Endothelial cell of umbilical vein (primary cell): ENCODE measurements at regions of chr11 and their contacts with region 1.

Region 1: GRCh38 chr11:67288452-67289225 is 464 bp upstream of the ANKRD13D start:
- DNase-seq: peak; percentile 86
- H3K4me3 ChIP-seq: peak overlapping the region; percentile 52 to 65 (median 54)
- H3K27ac ChIP-seq: peak overlapping the region; percentile 61
- H3K4me1 ChIP-seq: peaks cover 22% of the 10 kb centered on the region
- H3K27me3 ChIP-seq: no peaks in the 10 kb centered on the region
- CTCF ChIP-seq: peak; percentile 44 to 53
- POLR2A ChIP-seq: no peak

Region 2: GRCh38 chr11:67277231-67277961 is 11.2 kb before region 1 on chr11:
- CTCF ChIA-PET with region 1: interaction called, 16 read pairs
- POLR2A ChIA-PET with region 1: interaction called, 9 read pairs
- dilution Hi-C with region 1: no loop called
- intact Hi-C with region 1: loop called (anchors 1 kb)
- DNase-seq: peak; percentile 88
- H3K4me3 ChIP-seq: no peak overlapping the region
- H3K27ac ChIP-seq: peak overlapping the region; percentile 76
- H3K4me1 ChIP-seq: peaks cover 17% of the 10 kb centered on the region
- H3K27me3 ChIP-seq: no peaks in the 10 kb centered on the region
- CTCF ChIP-seq: no peak
- POLR2A ChIP-seq: no peak

Region 3: DNA sequence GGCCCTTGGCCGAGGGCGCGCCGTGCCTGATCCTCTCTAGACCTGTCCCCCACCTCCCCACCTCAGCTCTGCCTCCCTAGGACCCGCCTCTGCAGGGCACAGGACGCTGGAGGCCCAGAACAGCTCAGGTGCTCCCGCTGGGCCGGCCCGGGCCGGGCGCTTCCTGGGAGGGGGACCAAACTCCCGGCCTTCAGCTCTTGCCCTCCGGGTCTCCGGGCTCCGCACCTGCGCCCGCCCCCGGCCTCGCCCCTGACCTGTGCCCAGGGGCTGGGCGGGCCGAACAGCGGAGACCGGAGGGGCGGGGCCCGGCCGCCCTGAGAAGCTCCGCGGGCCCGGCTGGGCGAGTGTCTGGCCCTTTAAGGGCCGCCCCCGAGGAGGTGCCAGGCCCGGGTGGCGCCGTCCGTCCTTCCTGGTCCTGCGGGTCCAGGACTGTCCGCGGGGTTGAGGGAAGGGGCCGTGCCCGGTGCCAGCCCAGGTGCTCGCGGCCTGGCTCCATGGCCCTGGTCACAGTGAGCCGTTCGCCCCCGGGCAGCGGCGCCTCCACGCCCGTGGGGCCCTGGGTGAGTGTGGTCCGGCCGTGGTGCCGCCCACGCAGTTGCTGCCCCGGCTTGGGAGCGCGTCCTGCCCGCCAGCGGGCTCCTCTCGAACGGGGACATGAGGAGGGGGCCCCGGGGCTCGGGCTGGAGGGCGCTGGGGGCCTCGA is 14.6 kb after region 1 on chr11 and contains the start of gene SSH3:
- CTCF ChIA-PET with region 1: interaction called, 9 read pairs
- POLR2A ChIA-PET with region 1: no interaction called
- dilution Hi-C with region 1: no loop called
- intact Hi-C with region 1: loop called (anchors 2 kb)
- DNase-seq: peak; percentile 55
- H3K4me3 ChIP-seq: peak within 1 kb of the TSS; percentile 62 to 89 (median 74)
- H3K27ac ChIP-seq: no peak within 1 kb of the TSS
- H3K4me1 ChIP-seq: peaks cover 3% of the 10 kb centered on the region
- H3K27me3 ChIP-seq: no peaks in the 10 kb centered on the region
- CTCF ChIP-seq: no peak
- POLR2A ChIP-seq: peak; percentile 51
- total RNA-seq, gene SSH3: 16.5 and 22.5 TPM in 2 replicates